ENCODE measurements at regions of chrX and their contacts with region 1.

Region 1: GRCh38 chrX:111869639-111870034 is 6.3 kb upstream of the TRPC5OS start:
- DNase-seq: peak; percentile 3
- ATAC-seq: peak; percentile 73
- H3K4me3 Mint-ChIP-seq: no peak overlapping the region
- H3K27ac Mint-ChIP-seq: no peak overlapping the region
- H3K4me1 Mint-ChIP-seq: peaks cover 2% of the 10 kb centered on the region
- H3K27me3 Mint-ChIP-seq: peaks cover 5% of the 10 kb centered on the region
- CTCF ChIP-seq: peak; percentile 38

Region 2: GRCh38 chrX:111662292-111662691 is 207.3 kb before region 1 on chrX:
- CTCF ChIA-PET with region 1: no interaction called
- POLR2A ChIA-PET with region 1: no interaction called
- intact Hi-C with region 1: no loop called
- DNase-seq: no peak
- ATAC-seq: no peak
- H3K4me3 Mint-ChIP-seq: no peak overlapping the region
- H3K27ac Mint-ChIP-seq: no peak overlapping the region
- H3K4me1 Mint-ChIP-seq: no peaks in the 10 kb centered on the region
- H3K27me3 Mint-ChIP-seq: no peaks in the 10 kb centered on the region
- CTCF ChIP-seq: no peak

Region 3: DNA sequence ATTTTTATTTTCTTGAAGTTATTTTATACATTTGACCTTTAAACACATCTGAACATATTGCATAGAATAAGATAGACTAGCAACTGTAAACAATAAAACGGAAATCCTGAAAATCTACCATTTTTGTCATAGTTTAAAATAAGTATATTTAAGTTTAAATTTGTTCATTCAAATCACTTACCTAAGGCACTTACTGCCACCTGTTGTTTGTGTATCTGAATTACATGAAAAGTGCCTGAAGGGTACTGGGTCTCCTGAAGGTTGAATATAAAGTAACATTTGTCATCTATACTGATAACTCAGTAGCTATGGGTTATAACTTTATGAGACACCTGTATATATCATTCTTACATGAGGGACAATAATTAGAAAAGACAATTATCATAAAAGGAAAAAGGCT is 174.4 kb after region 1 on chrX:
- CTCF ChIA-PET with region 1: interaction called, 13 read pairs
- POLR2A ChIA-PET with region 1: no interaction called
- intact Hi-C with region 1: no loop called
- DNase-seq: no peak
- ATAC-seq: no peak
- H3K4me3 Mint-ChIP-seq: no peak overlapping the region
- H3K27ac Mint-ChIP-seq: no peak overlapping the region
- H3K4me1 Mint-ChIP-seq: no peaks in the 10 kb centered on the region
- H3K27me3 Mint-ChIP-seq: no peaks in the 10 kb centered on the region
- CTCF ChIP-seq: peak; percentile 22

Measured in activated CD8-positive, alpha-beta T cell treated with anti-CD3 and anti-CD28 coated beads for 36 hours (primary cell).